Left ventricle myocardium superior (tissue), 1 donor: ENCODE measurements at regions of chr5 and their contacts with region 1.

Region 1: GRCh38 chr5:170420780-170421412 is 31.7 kb upstream of the KCNMB1 start:
- DNase-seq: peak; percentile 45
- ATAC-seq: peak; percentile 72

Region 2: GRCh38 chr5:170225326-170226128 is 195.4 kb before region 1 on chr5:
- intact Hi-C with region 1: loop called (anchors 2 kb)
- DNase-seq: peak; percentile 72
- ATAC-seq: peak; percentile 84

Region 3: GRCh38 chr5:170267431-170268152 is 153.3 kb before region 1 on chr5:
- intact Hi-C with region 1: loop called (anchors 5 kb)
- DNase-seq: peak; percentile 78
- ATAC-seq: peak; percentile 83

Region 4: GRCh38 chr5:171897231-171897630 is 1476.3 kb after region 1 on chr5:
- intact Hi-C with region 1: no loop called
- DNase-seq: no peak
- ATAC-seq: no peak